Activated T-helper 1 cell treated with anti-CD3 and anti-CD28 coated beads, Interleukin-12 subunit alpha, Interleukin-12 subunit beta, Interleukin-2, Interleukin-4 antibody, amounts not matched to agents 30 ng/mL and 10 ng/mL and 1 ng/mL, durations not matched to agents 14 hours and 24 hours and 36 hours (primary cell): ENCODE measurements at regions of chr3 and their contacts with region 1.

Region 1: DNA sequence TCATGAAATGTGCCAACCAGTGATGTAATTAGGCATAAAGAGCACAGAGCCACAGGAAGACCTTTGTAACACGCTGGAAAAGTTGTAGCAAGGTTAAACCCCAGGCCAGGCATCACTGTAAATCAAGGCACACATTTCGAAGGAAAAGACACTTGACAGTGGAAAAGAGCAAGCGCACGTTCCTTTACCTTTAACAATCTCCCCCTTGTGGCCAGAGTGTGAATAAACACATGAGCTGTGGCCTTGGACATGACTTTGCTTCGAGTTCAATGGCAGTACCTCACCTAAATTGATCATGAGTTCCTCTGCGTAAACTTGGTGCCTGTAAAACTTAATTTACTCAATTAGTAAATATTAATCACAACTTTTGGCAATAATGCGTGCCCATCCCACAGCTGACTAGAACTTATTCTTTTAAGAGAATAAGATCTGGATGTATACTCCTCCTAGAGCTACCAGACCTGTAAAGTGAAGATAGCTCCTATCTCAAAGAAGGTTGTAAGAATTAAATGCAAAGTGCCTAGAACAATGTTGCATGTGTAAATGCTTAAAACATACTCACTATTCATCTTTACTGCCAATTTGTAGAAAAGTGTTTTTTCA is 757.0 kb upstream of the NECTIN3 start:
- DNase-seq: peak; percentile 20
- H3K4me3 Mint-ChIP-seq: no peak overlapping the region
- H3K27ac Mint-ChIP-seq: no peak overlapping the region
- H3K4me1 Mint-ChIP-seq: no peaks in the 10 kb centered on the region
- H3K27me3 Mint-ChIP-seq: peaks cover 5% of the 10 kb centered on the region

Region 2: DNA sequence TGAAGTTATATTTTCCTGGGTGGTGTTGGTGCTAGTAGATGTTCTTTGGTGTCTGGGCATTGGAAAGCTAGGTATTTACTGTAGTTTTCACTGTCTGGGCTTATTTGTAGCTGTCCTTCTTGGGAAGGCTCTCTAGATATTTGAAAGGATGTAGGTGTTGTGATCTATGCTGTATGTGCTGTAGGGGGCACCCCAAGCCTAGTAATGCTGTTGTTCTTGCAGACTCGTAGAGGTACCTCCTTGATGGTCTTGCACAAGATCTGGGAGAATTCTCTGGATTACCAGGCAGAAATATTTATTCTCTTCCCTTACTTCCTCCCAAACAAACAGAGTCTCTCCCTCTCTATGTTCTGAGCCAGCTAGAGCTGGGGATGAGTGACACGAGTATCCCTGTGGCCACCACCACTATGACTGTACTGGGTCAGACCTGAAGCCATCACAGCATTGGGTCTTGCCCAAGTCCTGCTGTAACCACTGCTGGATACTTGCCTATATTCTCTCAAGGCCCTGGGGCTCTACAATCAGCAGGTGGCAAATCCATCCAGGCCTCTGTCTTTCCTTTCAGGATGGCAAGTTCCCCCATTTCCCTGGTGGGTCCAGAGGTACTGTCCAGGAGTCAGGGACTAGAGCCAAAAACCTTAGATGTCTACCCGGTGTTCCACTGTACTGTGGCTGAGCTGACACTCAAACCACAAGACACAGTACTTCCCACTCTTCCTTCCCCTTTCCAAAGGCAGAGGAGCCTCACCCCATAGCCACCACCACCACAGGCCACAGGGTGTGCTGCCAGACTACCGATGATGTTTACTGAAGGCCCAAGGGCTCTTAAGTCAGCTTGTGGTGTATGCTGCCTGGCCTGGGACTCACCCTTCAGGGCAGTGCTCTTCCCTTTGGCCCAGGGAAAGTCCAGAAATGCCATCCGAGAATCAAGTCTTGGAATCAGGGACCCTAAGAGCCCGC is 782.1 kb before region 1 on chr3:
- intact Hi-C with region 1: loop called (anchors 1 kb)
- DNase-seq: no peak
- H3K4me3 Mint-ChIP-seq: no peak overlapping the region
- H3K27ac Mint-ChIP-seq: no peak overlapping the region
- H3K4me1 Mint-ChIP-seq: no peaks in the 10 kb centered on the region
- H3K27me3 Mint-ChIP-seq: no peaks in the 10 kb centered on the region